ENCODE measurements at regions of chr12 and their contacts with region 1.

Region 1: GRCh38 chr12:32365473-32366064 is 33.8 kb upstream of the FGD4 start:
- DNase-seq: peak in 7 of 9 donors; percentile 7 to 36 (median 23)
- ATAC-seq: peak; percentile 67
- H3K4me3 ChIP-seq: no peak overlapping the region
- H3K4me3 Mint-ChIP-seq: no peak overlapping the region
- H3K27ac ChIP-seq: no peak overlapping the region
- H3K27ac Mint-ChIP-seq: no peak overlapping the region
- H3K4me1 ChIP-seq: no peaks in the 10 kb centered on the region
- H3K4me1 Mint-ChIP-seq: no peaks in the 10 kb centered on the region
- H3K27me3 ChIP-seq: no peaks in the 10 kb centered on the region
- H3K27me3 Mint-ChIP-seq: no peaks in the 10 kb centered on the region

Region 2: GRCh38 chr12:31650927-31651326 is 714.6 kb before region 1 on chr12:
- CTCF ChIA-PET with region 1: no interaction called
- POLR2A ChIA-PET with region 1: no interaction called
- intact Hi-C with region 1: loop called (anchors 1 to 5 kb)
- DNase-seq: no peak
- ATAC-seq: no peak
- H3K4me3 ChIP-seq: no peak overlapping the region
- H3K4me3 Mint-ChIP-seq: no peak overlapping the region
- H3K27ac ChIP-seq: no peak overlapping the region
- H3K27ac Mint-ChIP-seq: no peak overlapping the region
- H3K4me1 ChIP-seq: peaks cover 0 to 7% of the 10 kb centered on the region in 2 donors
- H3K4me1 Mint-ChIP-seq: peaks cover 6 to 16% (median 13%) of the 10 kb centered on the region in 7 donors
- H3K27me3 ChIP-seq: no peaks in the 10 kb centered on the region
- H3K27me3 Mint-ChIP-seq: no peaks in the 10 kb centered on the region

Region 3: GRCh38 chr12:32455607-32456071 is 90.1 kb after region 1 on chr12:
- CTCF ChIA-PET with region 1: no interaction called
- POLR2A ChIA-PET with region 1: no interaction called
- intact Hi-C with region 1: loop called in 1 of 2 experiments (anchors 5 kb)
- DNase-seq: peak in 6 of 9 donors; percentile 4 to 45 (median 32)
- ATAC-seq: peak; percentile 63
- H3K4me3 ChIP-seq: no peak overlapping the region
- H3K4me3 Mint-ChIP-seq: peak overlapping the region in 5 of 10 donors; percentile 16 to 55 (median 36)
- H3K27ac ChIP-seq: no peak overlapping the region
- H3K27ac Mint-ChIP-seq: no peak overlapping the region
- H3K4me1 ChIP-seq: no peaks in the 10 kb centered on the region
- H3K4me1 Mint-ChIP-seq: peaks cover 0 to 4% (median 0%) of the 10 kb centered on the region in 7 donors
- H3K27me3 ChIP-seq: no peaks in the 10 kb centered on the region
- H3K27me3 Mint-ChIP-seq: peaks cover 0 to 10% (median 0%) of the 10 kb centered on the region in 5 donors

Region 4: GRCh38 chr12:32659908-32660440 is 294.4 kb after region 1 on chr12:
- CTCF ChIA-PET with region 1: no interaction called
- POLR2A ChIA-PET with region 1: no interaction called
- intact Hi-C with region 1: loop called in 1 of 2 experiments (anchors 5 kb)
- DNase-seq: no peak
- ATAC-seq: no peak
- H3K4me3 ChIP-seq: no peak overlapping the region
- H3K4me3 Mint-ChIP-seq: no peak overlapping the region
- H3K27ac ChIP-seq: no peak overlapping the region
- H3K27ac Mint-ChIP-seq: no peak overlapping the region
- H3K4me1 ChIP-seq: no peaks in the 10 kb centered on the region
- H3K4me1 Mint-ChIP-seq: peaks cover 0 to 8% (median 0%) of the 10 kb centered on the region in 7 donors
- H3K27me3 ChIP-seq: no peaks in the 10 kb centered on the region
- H3K27me3 Mint-ChIP-seq: no peaks in the 10 kb centered on the region

Region 5: GRCh38 chr12:32671930-32672780 is 306.6 kb after region 1 on chr12:
- CTCF ChIA-PET with region 1: no interaction called
- POLR2A ChIA-PET with region 1: no interaction called
- intact Hi-C with region 1: loop called in 1 of 2 experiments (anchors 1 kb)
- DNase-seq: no peak
- ATAC-seq: no peak
- H3K4me3 ChIP-seq: no peak overlapping the region
- H3K4me3 Mint-ChIP-seq: no peak overlapping the region
- H3K27ac ChIP-seq: no peak overlapping the region
- H3K27ac Mint-ChIP-seq: no peak overlapping the region
- H3K4me1 ChIP-seq: no peaks in the 10 kb centered on the region
- H3K4me1 Mint-ChIP-seq: peaks cover 0 to 3% (median 0%) of the 10 kb centered on the region in 7 donors
- H3K27me3 ChIP-seq: no peaks in the 10 kb centered on the region
- H3K27me3 Mint-ChIP-seq: peaks cover 0 to 4% (median 0%) of the 10 kb centered on the region in 5 donors

Region 6: GRCh38 chr12:34022079-34022830 is 1656.7 kb after region 1 on chr12 and contains the start of gene ALG10:
- CTCF ChIA-PET with region 1: no interaction called
- POLR2A ChIA-PET with region 1: no interaction called
- intact Hi-C with region 1: loop called (anchors 1 to 5 kb)
- DNase-seq: peak; percentile 88 to 98 (median 96)
- ATAC-seq: peak; percentile 98
- H3K4me3 ChIP-seq: peak within 1 kb of the TSS; percentile 87
- H3K4me3 Mint-ChIP-seq: peak within 1 kb of the TSS; percentile 93 to 99 (median 96)
- H3K27ac ChIP-seq: peak within 1 kb of the TSS; percentile 94
- H3K27ac Mint-ChIP-seq: peak within 1 kb of the TSS; percentile 95 to 99 (median 98)
- H3K4me1 ChIP-seq: peaks cover 4 to 8% of the 10 kb centered on the region in 2 donors
- H3K4me1 Mint-ChIP-seq: peaks cover 6 to 42% (median 30%) of the 10 kb centered on the region in 7 donors
- H3K27me3 ChIP-seq: no peaks in the 10 kb centered on the region
- H3K27me3 Mint-ChIP-seq: no peaks in the 10 kb centered on the region
- total RNA-seq, gene ALG10: 10.2 to 21.6 (median 17.5) TPM